HEK293T (cell line): ENCODE measurements at regions of chr13 and their contacts with region 1.

Region 1: DNA sequence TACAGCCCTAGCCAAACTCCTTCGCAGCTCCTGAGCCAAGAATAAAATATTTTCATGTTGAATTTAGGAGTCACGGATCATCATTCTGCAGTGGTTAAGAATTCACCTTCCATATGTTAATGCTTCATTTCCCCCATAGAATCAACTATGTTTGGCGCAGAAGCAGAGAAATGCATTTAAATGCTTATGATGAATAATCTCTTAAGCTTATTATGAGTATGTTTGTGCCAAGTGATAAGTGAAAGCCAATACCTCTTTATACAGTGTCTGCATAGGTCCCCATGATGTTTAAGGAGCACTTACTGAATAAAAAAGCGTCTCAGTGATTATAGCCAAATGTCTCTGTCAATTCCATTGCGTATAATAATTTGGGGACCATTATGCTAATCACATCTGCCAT is 32.7 kb upstream of the POMP start:
- DNase-seq: no peak

Region 2: DNA sequence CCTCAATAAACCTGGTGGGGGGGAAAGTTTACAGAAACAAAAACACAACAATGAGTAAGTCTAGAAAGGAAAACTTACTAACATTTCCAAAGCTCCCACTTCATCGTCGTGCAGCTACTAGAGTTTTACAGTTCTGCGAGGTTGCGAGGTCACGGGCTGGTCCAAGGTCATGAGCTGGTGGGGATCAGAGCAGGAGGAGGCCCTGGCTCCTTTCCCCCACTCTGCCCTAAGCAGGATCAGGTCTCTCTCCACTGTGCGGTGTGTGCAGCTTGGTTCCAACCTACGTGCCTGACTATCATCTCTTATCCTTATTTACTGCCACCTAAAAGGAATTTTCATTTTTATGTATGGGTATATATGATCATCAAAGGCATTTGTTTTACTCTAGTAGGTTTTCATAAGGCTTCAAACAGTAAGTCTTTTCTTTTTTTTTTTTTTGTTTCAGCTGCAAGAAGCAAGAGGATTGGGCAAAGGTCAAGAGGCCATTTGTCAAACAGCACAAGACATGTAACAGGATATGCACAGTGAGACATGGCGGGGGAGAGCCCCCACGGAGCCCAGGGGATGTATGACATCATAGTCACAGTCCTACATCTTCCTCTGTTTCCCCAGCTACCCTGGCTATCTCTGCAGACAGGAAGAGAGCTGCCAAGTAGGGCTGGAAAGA is 43.9 kb before region 1 on chr13:
- CTCF ChIA-PET with region 1: no interaction called
- POLR2A ChIA-PET with region 1: no interaction called
- DNase-seq: peak; percentile 49

Region 3: GRCh38 chr13:28650284-28650683 is 24.0 kb after region 1 on chr13:
- CTCF ChIA-PET with region 1: interaction called, 10 read pairs
- POLR2A ChIA-PET with region 1: no interaction called
- DNase-seq: no peak